ENCODE measurements at regions of chr15 and their contacts with region 1.

Region 1: GRCh38 chr15:80152180-80152845 is 486 bp upstream of the FAH start:
- DNase-seq: peak; percentile 74 to 92 (median 86)
- ATAC-seq: peak; percentile 76
- H3K4me3 ChIP-seq: peak overlapping the region; percentile 54 to 68
- H3K4me3 Mint-ChIP-seq: peak overlapping the region; percentile 87
- H3K27ac ChIP-seq: peak overlapping the region in 1 of 2 experiments; percentile 61
- H3K27ac Mint-ChIP-seq: peak overlapping the region; percentile 75
- H3K4me1 ChIP-seq: peaks cover 14% of the 10 kb centered on the region
- H3K4me1 Mint-ChIP-seq: peaks cover 20% of the 10 kb centered on the region
- H3K27me3 ChIP-seq: no peaks in the 10 kb centered on the region
- H3K27me3 Mint-ChIP-seq: no peaks in the 10 kb centered on the region
- CTCF ChIP-seq: no peak

Region 2: DNA sequence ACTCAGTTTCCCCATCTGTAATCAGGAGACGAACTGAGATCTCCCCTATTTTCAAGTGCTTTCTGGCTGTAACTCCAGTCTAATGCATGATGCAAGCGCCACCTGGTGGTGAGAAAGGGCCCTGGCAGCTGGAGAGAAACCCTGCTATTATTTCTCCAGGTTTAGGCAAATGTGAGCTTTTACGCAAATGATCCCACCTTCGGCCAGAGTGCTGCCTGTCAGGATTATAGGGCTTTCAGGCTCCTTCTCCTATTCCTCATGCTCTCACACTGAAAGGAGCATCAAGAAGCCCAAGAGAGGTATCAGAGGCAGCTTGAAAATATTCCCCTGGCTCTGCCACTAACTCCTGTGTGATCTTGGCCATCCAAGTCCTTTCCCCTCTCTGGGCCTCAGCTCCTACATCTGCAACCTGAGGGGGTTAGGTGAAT is 967.8 kb before region 1 on chr15:
- CTCF ChIA-PET with region 1: no interaction called
- POLR2A ChIA-PET with region 1: no interaction called
- intact Hi-C with region 1: no loop called
- DNase-seq: peak; percentile 27 to 76 (median 61)
- ATAC-seq: no peak
- H3K4me3 ChIP-seq: no peak overlapping the region
- H3K4me3 Mint-ChIP-seq: no peak overlapping the region
- H3K27ac ChIP-seq: no peak overlapping the region
- H3K27ac Mint-ChIP-seq: no peak overlapping the region
- H3K4me1 ChIP-seq: no peaks in the 10 kb centered on the region
- H3K4me1 Mint-ChIP-seq: no peaks in the 10 kb centered on the region
- H3K27me3 ChIP-seq: no peaks in the 10 kb centered on the region
- H3K27me3 Mint-ChIP-seq: peaks cover 8% of the 10 kb centered on the region
- CTCF ChIP-seq: peak; percentile 88

Region 3: GRCh38 chr15:79310983-79311900 is 841.1 kb before region 1 on chr15 and contains the start of gene TMED3:
- CTCF ChIA-PET with region 1: no interaction called
- POLR2A ChIA-PET with region 1: no interaction called
- intact Hi-C with region 1: loop called in 1 of 2 experiments (anchors 5 kb)
- DNase-seq: peak; percentile 56 to 92 (median 75)
- ATAC-seq: peak; percentile 95
- H3K4me3 ChIP-seq: peak within 1 kb of the TSS; percentile 83 to 88
- H3K4me3 Mint-ChIP-seq: peak within 1 kb of the TSS; percentile 89
- H3K27ac ChIP-seq: peak within 1 kb of the TSS in 1 of 2 experiments; percentile 47
- H3K27ac Mint-ChIP-seq: peak within 1 kb of the TSS; percentile 22
- H3K4me1 ChIP-seq: peaks cover 19% of the 10 kb centered on the region
- H3K4me1 Mint-ChIP-seq: peaks cover 49% of the 10 kb centered on the region
- H3K27me3 ChIP-seq: no peaks in the 10 kb centered on the region
- H3K27me3 Mint-ChIP-seq: no peaks in the 10 kb centered on the region
- CTCF ChIP-seq: no peak
- total RNA-seq, gene TMED3: 14.2 to 16.0 TPM

Region 4: DNA sequence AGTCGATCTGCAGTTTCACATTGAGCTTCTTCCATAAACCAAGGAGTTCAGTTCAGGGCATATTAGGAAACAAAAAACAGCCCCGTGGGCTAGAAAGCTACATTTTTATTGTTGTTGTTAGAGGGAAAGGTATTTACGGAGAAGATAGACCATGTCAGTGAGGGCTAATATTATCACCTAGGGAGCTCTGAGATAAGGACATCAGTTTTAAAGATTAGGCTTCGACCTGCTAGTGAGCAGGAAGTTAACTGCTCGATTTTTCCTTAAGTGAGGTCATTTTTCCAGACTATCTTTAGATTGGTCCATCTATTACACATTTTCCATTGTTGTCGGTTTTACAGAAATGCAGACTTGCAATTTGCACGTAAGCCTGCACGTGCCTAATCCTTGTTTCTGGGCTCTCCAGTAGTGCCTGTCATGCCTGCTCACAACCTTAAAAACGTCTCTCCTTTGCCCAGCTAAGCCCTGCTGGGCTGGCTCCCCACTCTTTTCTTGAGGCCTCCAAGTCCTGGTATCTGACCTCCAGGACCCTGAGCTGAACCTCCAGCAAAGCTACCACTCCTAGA is 328.1 kb before region 1 on chr15:
- CTCF ChIA-PET with region 1: no interaction called
- POLR2A ChIA-PET with region 1: no interaction called
- intact Hi-C with region 1: no loop called
- DNase-seq: no peak
- ATAC-seq: no peak
- H3K4me3 ChIP-seq: no peak overlapping the region
- H3K4me3 Mint-ChIP-seq: no peak overlapping the region
- H3K27ac ChIP-seq: no peak overlapping the region
- H3K27ac Mint-ChIP-seq: no peak overlapping the region
- H3K4me1 ChIP-seq: no peaks in the 10 kb centered on the region
- H3K4me1 Mint-ChIP-seq: no peaks in the 10 kb centered on the region
- H3K27me3 ChIP-seq: no peaks in the 10 kb centered on the region
- H3K27me3 Mint-ChIP-seq: no peaks in the 10 kb centered on the region
- CTCF ChIP-seq: no peak

Region 5: GRCh38 chr15:79923515-79924395 is 228.6 kb before region 1 on chr15:
- CTCF ChIA-PET with region 1: no interaction called
- POLR2A ChIA-PET with region 1: interaction called, 3 read pairs
- intact Hi-C with region 1: loop called (anchors 1 to 2 kb)
- DNase-seq: peak; percentile 95 to 100 (median 99)
- ATAC-seq: peak; percentile 93
- H3K4me3 ChIP-seq: peak overlapping the region; percentile 76 to 85
- H3K4me3 Mint-ChIP-seq: peak overlapping the region; percentile 91
- H3K27ac ChIP-seq: peak overlapping the region; percentile 90 to 94
- H3K27ac Mint-ChIP-seq: peak overlapping the region; percentile 93
- H3K4me1 ChIP-seq: peaks cover 11% of the 10 kb centered on the region
- H3K4me1 Mint-ChIP-seq: peaks cover 15% of the 10 kb centered on the region
- H3K27me3 ChIP-seq: no peaks in the 10 kb centered on the region
- H3K27me3 Mint-ChIP-seq: no peaks in the 10 kb centered on the region
- CTCF ChIP-seq: no peak

Region 6: GRCh38 chr15:80121546-80121945 is 30.8 kb before region 1 on chr15:
- CTCF ChIA-PET with region 1: no interaction called
- POLR2A ChIA-PET with region 1: no interaction called
- intact Hi-C with region 1: no loop called
- DNase-seq: no peak
- ATAC-seq: no peak
- H3K4me3 ChIP-seq: no peak overlapping the region
- H3K4me3 Mint-ChIP-seq: no peak overlapping the region
- H3K27ac ChIP-seq: no peak overlapping the region
- H3K27ac Mint-ChIP-seq: no peak overlapping the region
- H3K4me1 ChIP-seq: no peaks in the 10 kb centered on the region
- H3K4me1 Mint-ChIP-seq: peaks cover 19% of the 10 kb centered on the region
- H3K27me3 ChIP-seq: no peaks in the 10 kb centered on the region
- H3K27me3 Mint-ChIP-seq: no peaks in the 10 kb centered on the region
- CTCF ChIP-seq: no peak

Region 7: DNA sequence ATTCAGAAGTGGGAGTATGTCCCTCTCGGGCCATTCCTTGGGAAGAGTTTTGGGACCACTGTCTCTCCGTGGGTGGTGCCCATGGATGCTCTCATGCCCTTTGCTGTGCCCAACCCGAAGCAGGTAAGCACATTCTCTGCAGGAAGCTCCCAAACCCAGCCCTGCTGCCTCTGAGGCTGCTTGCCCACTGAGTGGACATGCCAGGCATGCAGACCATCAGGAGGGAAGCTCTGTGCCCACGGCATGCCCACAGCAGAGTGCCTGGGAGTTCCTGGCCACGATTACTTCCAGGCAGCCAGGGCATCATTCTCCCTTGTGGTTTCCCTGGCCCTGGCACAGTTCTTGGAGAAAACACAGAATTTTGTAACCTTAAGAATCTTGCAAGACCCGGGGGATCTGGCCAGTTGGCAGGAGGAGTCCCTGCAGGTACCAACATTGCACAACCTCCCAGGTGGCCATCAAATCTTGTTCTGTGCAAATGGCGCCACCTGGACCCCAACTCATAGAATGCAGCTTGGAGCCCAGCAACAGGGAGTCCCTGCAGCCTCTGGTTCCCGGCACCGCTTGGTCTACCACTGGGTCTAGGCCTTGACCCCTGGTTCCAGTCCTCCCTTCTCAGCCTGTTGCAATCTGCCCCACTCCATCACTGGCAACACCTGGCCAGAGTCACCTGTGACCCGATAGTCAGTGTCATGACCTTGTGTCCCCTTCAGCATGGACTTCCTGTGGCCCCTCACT is 20.9 kb after region 1 on chr15:
- CTCF ChIA-PET with region 1: interaction called, 12 read pairs
- POLR2A ChIA-PET with region 1: interaction called, 3 read pairs
- intact Hi-C with region 1: no loop called
- DNase-seq: peak; percentile 52 to 81 (median 69)
- ATAC-seq: peak; percentile 77
- H3K4me3 ChIP-seq: no peak overlapping the region
- H3K4me3 Mint-ChIP-seq: no peak overlapping the region
- H3K27ac ChIP-seq: no peak overlapping the region
- H3K27ac Mint-ChIP-seq: no peak overlapping the region
- H3K4me1 ChIP-seq: no peaks in the 10 kb centered on the region
- H3K4me1 Mint-ChIP-seq: no peaks in the 10 kb centered on the region
- H3K27me3 ChIP-seq: no peaks in the 10 kb centered on the region
- H3K27me3 Mint-ChIP-seq: no peaks in the 10 kb centered on the region
- CTCF ChIP-seq: peak; percentile 76

Region 8: DNA sequence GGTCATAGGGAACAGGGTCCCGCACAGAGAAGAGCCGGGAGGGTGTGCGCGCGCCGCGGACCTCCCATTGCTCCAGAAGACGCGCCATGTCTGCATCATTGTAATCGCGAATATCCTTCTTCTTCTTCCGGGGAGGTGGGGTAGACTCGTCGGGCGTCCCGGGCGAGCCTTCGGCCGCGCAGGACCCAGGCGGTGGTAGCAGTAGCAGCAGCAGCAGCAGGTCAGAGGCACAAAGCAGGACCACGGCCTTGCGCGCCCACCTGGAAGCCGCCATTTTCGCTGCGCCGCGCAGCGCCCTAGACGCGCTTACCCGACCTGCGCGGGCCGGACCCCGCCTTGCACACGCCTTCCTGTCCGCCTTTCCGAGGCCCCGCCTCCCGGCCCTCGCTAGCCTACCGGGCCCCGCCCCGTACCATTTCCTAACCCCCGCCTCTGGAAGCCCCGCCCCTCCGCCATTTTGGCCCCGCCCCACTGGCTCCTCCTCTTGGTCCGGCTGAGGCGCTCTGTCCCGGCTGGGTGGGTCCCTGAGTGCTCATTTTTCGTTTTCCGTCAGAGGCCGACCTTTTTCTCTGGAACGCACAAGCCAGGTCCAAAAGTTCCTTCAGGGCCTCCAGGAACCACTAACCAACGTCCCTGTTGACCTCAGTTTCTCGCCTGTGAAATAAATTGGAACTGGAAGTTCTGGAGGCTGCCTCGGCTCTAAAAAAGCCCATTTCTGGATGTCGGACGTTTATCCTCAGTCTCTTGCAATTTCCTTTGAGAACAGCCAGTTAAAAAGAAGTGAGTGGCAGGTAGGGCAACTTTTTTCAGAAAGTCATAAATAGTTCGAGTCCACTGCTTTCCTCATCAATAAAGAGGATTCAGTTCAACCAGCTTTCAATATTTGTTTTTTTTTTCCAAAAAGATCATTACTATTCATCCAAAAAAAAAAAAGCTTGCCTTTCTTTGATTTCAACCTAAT is 837.5 kb after region 1 on chr15 and contains the start of gene MESD:
- CTCF ChIA-PET with region 1: no interaction called
- POLR2A ChIA-PET with region 1: no interaction called
- intact Hi-C with region 1: loop called in 1 of 2 experiments (anchors 5 kb)
- DNase-seq: peak; percentile 91 to 99 (median 98)
- ATAC-seq: peak; percentile 100
- H3K4me3 ChIP-seq: peak within 1 kb of the TSS; percentile 70 to 96
- H3K4me3 Mint-ChIP-seq: peak within 1 kb of the TSS; percentile 100
- H3K27ac ChIP-seq: peak within 1 kb of the TSS; percentile 76 to 95
- H3K27ac Mint-ChIP-seq: peak within 1 kb of the TSS; percentile 99
- H3K4me1 ChIP-seq: peaks cover 50% of the 10 kb centered on the region
- H3K4me1 Mint-ChIP-seq: peaks cover 62% of the 10 kb centered on the region
- H3K27me3 ChIP-seq: no peaks in the 10 kb centered on the region
- H3K27me3 Mint-ChIP-seq: no peaks in the 10 kb centered on the region
- CTCF ChIP-seq: no peak
- total RNA-seq, gene MESD: 6.4 to 8.1 TPM